PC-9 (cell line): ENCODE measurements at regions of chr13 and their contacts with region 1.

Region 1: DNA sequence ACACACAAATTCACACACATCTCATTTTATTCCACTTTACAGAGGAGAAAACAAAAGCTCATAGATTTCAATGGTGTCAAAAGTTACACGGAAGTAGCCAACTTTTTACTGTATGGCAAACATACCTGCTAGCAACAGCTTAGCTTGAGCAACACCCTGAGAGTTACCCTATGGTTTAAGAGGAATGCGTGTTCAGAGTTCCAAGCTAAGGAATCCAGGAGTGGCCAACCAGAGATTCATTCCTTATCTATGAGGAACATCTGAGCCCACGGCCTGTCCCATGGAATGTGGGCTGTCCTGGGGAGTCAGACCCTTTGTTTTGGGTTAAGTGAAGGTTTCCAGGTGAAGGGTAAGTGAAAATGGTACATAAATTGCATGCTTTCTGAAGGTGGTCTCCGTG is 67.6 kb downstream of the STARD13 start:
- DNase-seq: peak; percentile 69 to 99
- H3K4me3 ChIP-seq: peak overlapping the region; percentile 26; the same call in 1 of the 2 replicates
- H3K27ac ChIP-seq: peak overlapping the region; percentile 97
- H3K4me1 ChIP-seq: peaks cover 63% of the 10 kb centered on the region
- H3K27me3 ChIP-seq: no peaks in the 10 kb centered on the region
- CTCF ChIP-seq: no peak

Region 2: DNA sequence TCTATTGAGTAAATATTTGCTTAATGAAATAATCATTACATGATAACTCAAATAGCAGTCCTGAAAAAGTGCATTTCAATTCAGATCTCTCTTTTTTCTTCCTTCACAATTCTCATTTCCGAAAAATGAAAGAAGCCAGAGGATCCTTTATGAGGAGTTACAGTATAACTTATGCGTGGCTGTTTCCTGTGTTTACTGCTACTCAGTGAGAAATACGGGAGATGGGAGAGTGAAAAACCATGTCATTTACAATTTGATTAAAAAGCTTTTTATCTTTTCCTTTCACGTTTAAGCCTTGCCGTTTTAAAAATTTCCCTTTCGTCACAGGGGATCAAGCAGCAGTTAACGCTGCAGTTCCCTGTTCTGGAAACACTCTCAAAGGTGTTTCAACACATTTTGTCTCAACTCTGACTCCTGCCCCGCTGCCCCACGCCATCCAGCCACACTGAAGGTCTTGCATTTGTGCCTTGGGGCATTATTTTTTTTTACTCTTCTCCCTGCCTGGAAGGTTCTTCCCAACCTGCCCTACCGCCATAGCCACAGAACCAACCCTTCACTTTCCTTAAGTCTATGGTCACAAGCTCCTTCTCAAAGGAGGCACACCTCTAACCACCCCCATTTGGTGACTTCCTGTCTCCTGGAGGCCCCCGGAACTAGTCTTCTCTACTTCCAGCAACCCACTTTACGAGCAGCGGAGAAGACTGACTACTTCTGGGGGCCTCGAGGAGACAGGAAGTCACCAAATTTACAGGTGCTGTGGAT is 184.8 kb before region 1 on chr13:
- CTCF ChIA-PET with region 1: no interaction called
- POLR2A ChIA-PET with region 1: no interaction called
- intact Hi-C with region 1: no loop called
- DNase-seq: no peak
- H3K4me3 ChIP-seq: no peak overlapping the region
- H3K27ac ChIP-seq: no peak overlapping the region
- H3K4me1 ChIP-seq: no peaks in the 10 kb centered on the region
- H3K27me3 ChIP-seq: no peaks in the 10 kb centered on the region
- CTCF ChIP-seq: no peak

Region 3: GRCh38 chr13:33119871-33120456 is 98.0 kb before region 1 on chr13:
- CTCF ChIA-PET with region 1: no interaction called
- POLR2A ChIA-PET with region 1: no interaction called
- intact Hi-C with region 1: loop called (anchors 1 kb)
- DNase-seq: peak; percentile 62 to 97
- H3K4me3 ChIP-seq: peak overlapping the region; percentile 32; the same call in 1 of the 2 replicates
- H3K27ac ChIP-seq: peak overlapping the region; percentile 98
- H3K4me1 ChIP-seq: peaks cover 65% of the 10 kb centered on the region
- H3K27me3 ChIP-seq: no peaks in the 10 kb centered on the region
- CTCF ChIP-seq: no peak

Region 4: GRCh38 chr13:33125821-33126570 is 92.0 kb before region 1 on chr13:
- CTCF ChIA-PET with region 1: no interaction called
- POLR2A ChIA-PET with region 1: interaction called, 3 read pairs
- intact Hi-C with region 1: loop called (anchors 1 kb)
- DNase-seq: peak; percentile 73 to 98
- H3K4me3 ChIP-seq: peak overlapping the region; percentile 26; the same call in 1 of the 2 replicates
- H3K27ac ChIP-seq: peak overlapping the region; percentile 95
- H3K4me1 ChIP-seq: peaks cover 64% of the 10 kb centered on the region
- H3K27me3 ChIP-seq: no peaks in the 10 kb centered on the region
- CTCF ChIP-seq: no peak

Region 5: GRCh38 chr13:33153421-33154404 is 64.3 kb before region 1 on chr13:
- CTCF ChIA-PET with region 1: no interaction called
- POLR2A ChIA-PET with region 1: no interaction called
- intact Hi-C with region 1: loop called (anchors 1 kb)
- DNase-seq: peak; percentile 35 to 48
- H3K4me3 ChIP-seq: no peak overlapping the region
- H3K27ac ChIP-seq: peak overlapping the region; percentile 83
- H3K4me1 ChIP-seq: peaks cover 41% of the 10 kb centered on the region
- H3K27me3 ChIP-seq: no peaks in the 10 kb centered on the region
- CTCF ChIP-seq: no peak

Region 6: DNA sequence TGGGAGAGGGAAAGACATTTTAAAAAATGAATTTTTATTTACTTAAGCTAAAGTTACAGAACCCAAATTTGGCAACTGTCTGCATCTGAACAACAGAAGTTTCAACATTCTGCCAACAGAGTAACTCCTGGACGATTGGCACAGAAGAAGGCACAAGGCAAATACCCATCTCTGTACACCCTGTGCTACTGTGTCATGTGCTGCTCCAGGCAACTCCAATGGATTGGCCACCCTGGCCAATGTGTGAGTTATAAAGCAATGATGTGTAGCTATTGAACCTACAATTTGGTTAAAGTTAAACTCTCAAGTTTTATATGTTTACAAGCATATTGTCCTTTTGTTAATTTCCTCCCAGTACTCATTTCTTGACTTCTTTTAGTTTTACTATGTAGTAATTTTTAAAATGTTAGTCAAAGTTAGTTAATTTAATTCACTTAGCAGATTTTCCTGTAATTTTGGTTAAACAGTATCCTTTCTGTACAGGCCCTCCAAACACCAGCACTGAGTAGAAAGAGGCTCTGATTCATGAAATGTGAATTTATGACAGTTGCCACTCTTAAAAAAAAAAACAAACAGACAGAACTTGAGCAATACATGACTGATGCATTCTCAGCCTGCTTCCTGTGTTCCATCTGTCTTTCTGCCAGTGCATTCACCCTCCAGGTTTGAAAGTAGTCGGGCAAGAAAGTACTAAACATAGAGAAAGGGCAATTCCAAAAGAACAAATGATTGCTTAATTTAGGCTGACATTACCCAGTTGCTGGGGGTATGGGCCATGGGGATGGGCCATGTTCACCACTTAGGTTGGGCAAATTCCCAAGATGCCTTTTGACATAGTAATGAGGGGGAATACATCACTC is 61.6 kb after region 1 on chr13:
- CTCF ChIA-PET with region 1: no interaction called
- POLR2A ChIA-PET with region 1: no interaction called
- intact Hi-C with region 1: loop called (anchors 1 kb)
- DNase-seq: peak; percentile 63 to 96
- H3K4me3 ChIP-seq: peak overlapping the region; percentile 28; the same call in 1 of the 2 replicates
- H3K27ac ChIP-seq: peak overlapping the region; percentile 93
- H3K4me1 ChIP-seq: peaks cover 63% of the 10 kb centered on the region
- H3K27me3 ChIP-seq: no peaks in the 10 kb centered on the region
- CTCF ChIP-seq: no peak

Region 7: DNA sequence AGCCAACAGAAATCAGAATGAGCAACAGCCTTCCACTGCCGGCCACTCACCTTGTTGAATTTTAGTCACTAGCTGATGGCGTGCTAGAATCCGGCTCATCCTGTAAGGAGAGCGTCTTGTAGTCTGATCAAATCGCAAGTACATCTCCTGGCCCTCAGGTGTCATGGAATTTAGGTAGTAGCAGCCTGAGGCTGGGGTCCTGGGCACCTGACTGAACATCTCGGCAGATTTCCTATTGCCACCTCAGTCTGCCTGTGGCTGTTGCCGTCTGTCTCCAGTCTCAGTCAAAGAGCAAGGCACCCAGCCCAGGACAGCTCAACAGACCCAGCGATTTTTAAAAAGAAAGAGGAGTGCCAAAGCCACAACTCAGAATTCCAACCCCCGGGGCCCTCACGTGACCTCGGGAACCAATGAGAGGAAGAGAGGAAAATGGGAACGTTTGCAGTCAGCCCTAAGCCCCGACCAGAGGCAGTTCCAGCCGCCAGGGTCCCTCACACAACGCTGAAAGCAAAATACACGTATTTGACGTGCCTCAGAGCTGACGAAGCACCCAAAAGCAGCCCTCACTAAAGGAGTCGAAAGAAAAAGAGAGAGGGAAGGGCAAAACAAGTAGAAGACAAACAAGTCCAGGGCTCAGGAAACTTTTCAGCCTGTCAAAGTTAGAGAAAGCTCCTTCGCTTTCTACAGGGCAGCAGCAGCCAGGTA is 67.6 kb after region 1 on chr13 and contains the start of gene STARD13:
- CTCF ChIA-PET with region 1: no interaction called
- POLR2A ChIA-PET with region 1: interaction called, 11 read pairs
- intact Hi-C with region 1: loop called (anchors 1 kb)
- DNase-seq: peak; percentile 91 to 93
- H3K4me3 ChIP-seq: peak within 1 kb of the TSS; percentile 94
- H3K27ac ChIP-seq: peak within 1 kb of the TSS; percentile 81
- H3K4me1 ChIP-seq: peaks cover 52% of the 10 kb centered on the region
- H3K27me3 ChIP-seq: no peaks in the 10 kb centered on the region
- CTCF ChIP-seq: no peak; the same call in 1 of the 2 replicates
- total RNA-seq, gene STARD13: 13.9 and 19.6 TPM in 2 replicates

Region 8: GRCh38 chr13:33859691-33860303 is 641.8 kb after region 1 on chr13:
- CTCF ChIA-PET with region 1: no interaction called
- POLR2A ChIA-PET with region 1: no interaction called
- intact Hi-C with region 1: no loop called
- DNase-seq: no peak
- H3K4me3 ChIP-seq: no peak overlapping the region
- H3K27ac ChIP-seq: no peak overlapping the region
- H3K4me1 ChIP-seq: no peaks in the 10 kb centered on the region
- H3K27me3 ChIP-seq: no peaks in the 10 kb centered on the region
- CTCF ChIP-seq: no peak

Region 9: GRCh38 chr13:34733736-34734135 is 1515.7 kb after region 1 on chr13:
- CTCF ChIA-PET with region 1: no interaction called
- POLR2A ChIA-PET with region 1: no interaction called
- intact Hi-C with region 1: no loop called
- DNase-seq: no peak
- H3K4me3 ChIP-seq: no peak overlapping the region
- H3K27ac ChIP-seq: no peak overlapping the region
- H3K4me1 ChIP-seq: no peaks in the 10 kb centered on the region
- H3K27me3 ChIP-seq: no peaks in the 10 kb centered on the region
- CTCF ChIP-seq: no peak